Esophagus muscularis mucosa (tissue), 4 donors: ENCODE measurements at regions of chr11 and their contacts with region 1.

Region 1: DNA sequence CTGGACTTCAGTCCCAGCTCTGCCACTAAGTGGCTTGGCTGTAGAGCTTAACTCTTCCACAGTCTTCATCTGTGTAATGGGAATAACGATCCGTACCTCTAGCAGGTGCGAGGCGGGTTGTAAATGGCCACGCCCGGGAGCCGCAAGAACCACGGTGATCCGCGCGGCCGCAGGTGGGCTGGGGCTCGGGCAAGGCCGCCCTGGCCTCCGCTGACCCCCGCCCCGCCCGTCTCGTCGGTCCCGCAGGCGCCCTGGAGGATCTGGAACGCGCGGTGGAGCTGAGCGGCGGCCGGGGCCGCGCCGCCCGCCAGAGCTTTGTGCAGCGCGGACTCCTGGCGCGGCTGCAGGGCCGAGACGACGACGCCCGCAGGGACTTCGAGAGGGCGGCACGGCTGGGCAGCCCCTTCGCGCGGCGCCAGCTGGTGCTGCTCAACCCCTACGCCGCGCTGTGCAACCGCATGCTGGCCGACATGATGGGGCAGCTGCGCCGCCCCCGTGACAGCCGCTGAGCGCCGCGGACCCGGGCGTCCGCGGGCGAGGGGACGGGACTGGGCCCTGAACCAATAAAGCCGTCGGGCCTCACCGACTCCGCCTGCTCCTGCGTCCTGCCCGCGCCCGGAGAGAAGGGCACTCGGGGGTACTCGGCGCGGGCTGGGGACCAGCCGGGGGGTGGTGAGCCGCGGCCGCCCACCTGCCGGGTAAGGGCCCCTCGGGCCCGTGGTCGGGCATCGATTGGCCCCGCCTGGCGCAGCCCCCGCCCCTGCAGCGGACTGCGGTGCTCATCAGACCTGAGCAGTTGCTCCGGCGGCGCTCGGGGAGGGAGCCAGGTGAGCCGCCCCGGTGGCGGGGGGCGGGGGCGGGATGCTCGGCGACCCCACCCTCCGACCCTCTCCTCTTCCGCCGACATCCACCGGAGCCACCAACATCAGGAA is at the start of gene TMEM25:
- DNase-seq: no peak
- H3K4me3 ChIP-seq: peak within 1 kb of the TSS; percentile 83 to 87 (median 84)
- H3K27ac ChIP-seq: peak within 1 kb of the TSS; percentile 74 to 86 (median 85)
- H3K4me1 ChIP-seq: peaks cover 15 to 43% (median 33%) of the 10 kb centered on the region in 4 donors
- H3K27me3 ChIP-seq: no peaks in the 10 kb centered on the region
- CTCF ChIP-seq: peak in 2 of 3 experiments; percentile 1 to 27
- EP300 ChIP-seq: no peak
- POLR2A ChIP-seq: peak; percentile 26
- total RNA-seq, gene TMEM25: 35.0 to 56.5 (median 54.0) TPM

Region 2: DNA sequence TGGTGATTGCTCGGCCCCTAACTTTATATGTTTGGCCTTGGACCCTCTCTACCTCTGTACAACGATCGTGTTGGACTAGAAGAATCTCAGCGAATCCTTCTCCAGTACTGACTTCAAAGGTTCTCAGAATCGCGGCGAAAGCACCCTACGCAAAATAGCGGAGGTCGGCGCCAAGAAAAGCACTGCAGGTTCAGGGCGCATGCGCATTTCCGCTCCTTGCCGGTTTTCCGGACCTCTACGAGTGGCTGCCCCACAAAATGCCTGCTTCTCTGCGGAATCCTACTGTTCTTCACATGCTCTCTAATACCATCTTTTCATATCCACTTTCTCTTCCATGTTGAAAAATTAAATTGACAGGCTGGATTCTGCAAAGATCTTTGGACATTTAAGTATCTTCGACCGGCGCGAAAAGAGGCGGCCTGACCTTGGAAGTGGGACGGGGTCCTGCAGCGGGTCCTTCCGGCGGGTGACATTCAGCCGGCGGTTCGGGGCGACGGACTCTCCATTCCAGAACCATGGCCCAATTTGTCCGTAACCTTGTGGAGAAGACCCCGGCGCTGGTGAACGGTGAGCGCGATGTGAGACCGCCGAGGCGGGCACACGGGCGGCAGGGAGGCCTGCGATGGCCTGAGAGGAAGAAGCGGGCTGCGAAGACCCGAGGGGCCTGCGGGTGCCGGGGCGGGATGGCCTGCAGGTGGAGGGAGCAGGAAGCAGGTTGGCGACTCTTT is 129.4 kb before region 1 on chr11 and contains the start of gene ATP5MG:
- intact Hi-C with region 1: no loop called
- DNase-seq: peak; percentile 94
- H3K4me3 ChIP-seq: peak within 1 kb of the TSS; percentile 72 to 95 (median 86)
- H3K27ac ChIP-seq: peak within 1 kb of the TSS; percentile 80 to 89 (median 86)
- H3K4me1 ChIP-seq: peaks cover 38 to 49% (median 48%) of the 10 kb centered on the region in 4 donors
- H3K27me3 ChIP-seq: no peaks in the 10 kb centered on the region
- CTCF ChIP-seq: peak in 1 of 3 experiments; percentile 19
- EP300 ChIP-seq: no peak
- POLR2A ChIP-seq: peak; percentile 76
- total RNA-seq, gene ATP5MG: 61.0 to 91.1 (median 69.1) TPM

Region 3: GRCh38 chr11:118503216-118503615 is 27.5 kb before region 1 on chr11:
- intact Hi-C with region 1: no loop called
- DNase-seq: no peak
- H3K4me3 ChIP-seq: no peak overlapping the region
- H3K27ac ChIP-seq: no peak overlapping the region
- H3K4me1 ChIP-seq: no peaks in the 10 kb centered on the region
- H3K27me3 ChIP-seq: no peaks in the 10 kb centered on the region
- CTCF ChIP-seq: no peak
- EP300 ChIP-seq: no peak
- POLR2A ChIP-seq: no peak

Region 4: GRCh38 chr11:118565051-118565450 is 34.4 kb after region 1 on chr11:
- intact Hi-C with region 1: loop called (anchors 5 kb)
- DNase-seq: peak; percentile 50
- H3K4me3 ChIP-seq: peak overlapping the region; percentile 57 to 71 (median 64)
- H3K27ac ChIP-seq: peak overlapping the region; percentile 75 to 84 (median 80)
- H3K4me1 ChIP-seq: peaks cover 0 to 26% (median 18%) of the 10 kb centered on the region in 4 donors
- H3K27me3 ChIP-seq: no peaks in the 10 kb centered on the region
- CTCF ChIP-seq: no peak
- EP300 ChIP-seq: no peak
- POLR2A ChIP-seq: no peak